Endothelial cell of umbilical vein (primary cell): ENCODE measurements at regions of chr16 and their contacts with region 1.

Region 1: GRCh38 chr16:87416826-87417527 is 24.8 kb downstream of the MAP1LC3B start:
- DNase-seq: peak; percentile 61
- H3K4me3 ChIP-seq: no peak overlapping the region
- H3K27ac ChIP-seq: no peak overlapping the region
- H3K4me1 ChIP-seq: no peaks in the 10 kb centered on the region
- H3K27me3 ChIP-seq: no peaks in the 10 kb centered on the region
- CTCF ChIP-seq: peak; percentile 58 to 59
- POLR2A ChIP-seq: no peak

Region 2: GRCh38 chr16:87435372-87436224 is 18.6 kb after region 1 on chr16:
- CTCF ChIA-PET with region 1: interaction called, 15 read pairs
- POLR2A ChIA-PET with region 1: no interaction called
- dilution Hi-C with region 1: no loop called
- intact Hi-C with region 1: no loop called
- DNase-seq: peak; percentile 95
- H3K4me3 ChIP-seq: peak overlapping the region in 2 of 3 experiments; percentile 10
- H3K27ac ChIP-seq: peak overlapping the region; percentile 90
- H3K4me1 ChIP-seq: peaks cover 18% of the 10 kb centered on the region
- H3K27me3 ChIP-seq: no peaks in the 10 kb centered on the region
- CTCF ChIP-seq: no peak
- POLR2A ChIP-seq: no peak

Region 3: GRCh38 chr16:87487361-87488001 is 70.5 kb after region 1 on chr16:
- CTCF ChIA-PET with region 1: interaction called, 11 read pairs
- POLR2A ChIA-PET with region 1: no interaction called
- dilution Hi-C with region 1: no loop called
- intact Hi-C with region 1: loop called (anchors 2 kb)
- DNase-seq: no peak
- H3K4me3 ChIP-seq: no peak overlapping the region
- H3K27ac ChIP-seq: no peak overlapping the region
- H3K4me1 ChIP-seq: peaks cover 53% of the 10 kb centered on the region
- H3K27me3 ChIP-seq: no peaks in the 10 kb centered on the region
- CTCF ChIP-seq: no peak
- POLR2A ChIP-seq: no peak

Region 4: GRCh38 chr16:87507351-87508069 is 90.5 kb after region 1 on chr16:
- CTCF ChIA-PET with region 1: no interaction called
- POLR2A ChIA-PET with region 1: no interaction called
- dilution Hi-C with region 1: no loop called
- intact Hi-C with region 1: no loop called
- DNase-seq: peak; percentile 26
- H3K4me3 ChIP-seq: no peak overlapping the region
- H3K27ac ChIP-seq: peak overlapping the region; percentile 23
- H3K4me1 ChIP-seq: peaks cover 14% of the 10 kb centered on the region
- H3K27me3 ChIP-seq: peaks cover 0 to 6% of the 10 kb centered on the region in 2 experiments
- CTCF ChIP-seq: no peak
- POLR2A ChIP-seq: no peak

Region 5: DNA sequence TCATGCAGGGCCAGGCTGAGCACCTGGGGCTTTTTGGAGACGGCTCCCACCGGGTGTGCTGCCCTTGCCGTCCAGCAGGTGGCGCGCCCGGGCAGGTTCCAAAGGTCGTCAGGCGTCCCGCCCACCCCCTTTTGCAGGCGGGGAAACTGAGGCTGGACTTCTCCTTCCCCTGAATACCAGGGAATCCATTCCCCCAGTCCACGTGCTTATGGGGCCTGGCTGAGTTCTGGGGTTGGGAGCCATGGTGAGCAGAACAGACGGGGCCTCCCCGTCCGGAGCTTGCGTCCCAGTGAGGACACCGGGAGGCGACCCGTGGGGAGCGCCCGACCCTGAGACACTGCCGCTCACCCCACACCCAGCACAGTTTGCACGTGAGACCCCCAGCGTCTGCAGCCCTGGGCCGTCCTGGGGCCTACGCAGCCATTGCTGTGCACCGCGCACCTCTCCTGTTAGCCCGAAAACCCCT is 133.6 kb after region 1 on chr16:
- CTCF ChIA-PET with region 1: interaction called, 15 read pairs
- POLR2A ChIA-PET with region 1: no interaction called
- dilution Hi-C with region 1: no loop called
- intact Hi-C with region 1: loop called (anchors 2 kb)
- DNase-seq: no peak
- H3K4me3 ChIP-seq: no peak overlapping the region
- H3K27ac ChIP-seq: no peak overlapping the region
- H3K4me1 ChIP-seq: no peaks in the 10 kb centered on the region
- H3K27me3 ChIP-seq: peaks cover 0 to 2% of the 10 kb centered on the region in 2 experiments
- CTCF ChIP-seq: peak; percentile 89 to 95
- POLR2A ChIP-seq: no peak

Region 6: GRCh38 chr16:87581833-87582203 is 164.8 kb after region 1 on chr16:
- CTCF ChIA-PET with region 1: interaction called, 10 read pairs
- POLR2A ChIA-PET with region 1: no interaction called
- dilution Hi-C with region 1: no loop called
- intact Hi-C with region 1: no loop called
- DNase-seq: peak; percentile 86
- H3K4me3 ChIP-seq: no peak overlapping the region
- H3K27ac ChIP-seq: peak overlapping the region; percentile 73
- H3K4me1 ChIP-seq: peaks cover 27% of the 10 kb centered on the region
- H3K27me3 ChIP-seq: no peaks in the 10 kb centered on the region
- CTCF ChIP-seq: no peak
- POLR2A ChIP-seq: no peak